ENCODE measurements at regions of chr18 and their contacts with region 1.

Region 1: GRCh38 chr18:9117980-9118841 is 15.7 kb downstream of the NDUFV2 start:
- DNase-seq: no peak
- ATAC-seq: peak; percentile 48
- H3K4me3 Mint-ChIP-seq: peak overlapping the region; percentile 59
- H3K27ac Mint-ChIP-seq: peak overlapping the region; percentile 86
- H3K4me1 Mint-ChIP-seq: peaks cover 75% of the 10 kb centered on the region
- H3K27me3 Mint-ChIP-seq: no peaks in the 10 kb centered on the region

Region 2: GRCh38 chr18:9095297-9096006 is 22.8 kb before region 1 on chr18:
- CTCF ChIA-PET with region 1: interaction called, 54 read pairs
- POLR2A ChIA-PET with region 1: interaction called, 11 read pairs
- DNase-seq: peak; percentile 78
- ATAC-seq: peak; percentile 66
- H3K4me3 Mint-ChIP-seq: peak overlapping the region; percentile 54
- H3K27ac Mint-ChIP-seq: peak overlapping the region; percentile 91
- H3K4me1 Mint-ChIP-seq: peaks cover 61% of the 10 kb centered on the region
- H3K27me3 Mint-ChIP-seq: no peaks in the 10 kb centered on the region

Region 3: GRCh38 chr18:9102508-9103375 is 15.5 kb before region 1 on chr18 and contains the start of gene NDUFV2:
- CTCF ChIA-PET with region 1: interaction called, 54 read pairs
- POLR2A ChIA-PET with region 1: interaction called, 107 read pairs
- DNase-seq: peak; percentile 98
- ATAC-seq: peak; percentile 91
- H3K4me3 Mint-ChIP-seq: peak within 1 kb of the TSS; percentile 89
- H3K27ac Mint-ChIP-seq: peak within 1 kb of the TSS; percentile 97
- H3K4me1 Mint-ChIP-seq: peaks cover 48% of the 10 kb centered on the region
- H3K27me3 Mint-ChIP-seq: no peaks in the 10 kb centered on the region
- total RNA-seq, gene NDUFV2: 200 to 206 TPM